Activated CD4-positive, alpha-beta memory T cell treated with anti-CD3 and anti-CD28 coated beads, Interleukin-2, amount 10 ng/mL, durations not matched to agents 7 days and 5 days (primary cell): ENCODE measurements at regions of chr15 and their contacts with region 1.

Region 1: DNA sequence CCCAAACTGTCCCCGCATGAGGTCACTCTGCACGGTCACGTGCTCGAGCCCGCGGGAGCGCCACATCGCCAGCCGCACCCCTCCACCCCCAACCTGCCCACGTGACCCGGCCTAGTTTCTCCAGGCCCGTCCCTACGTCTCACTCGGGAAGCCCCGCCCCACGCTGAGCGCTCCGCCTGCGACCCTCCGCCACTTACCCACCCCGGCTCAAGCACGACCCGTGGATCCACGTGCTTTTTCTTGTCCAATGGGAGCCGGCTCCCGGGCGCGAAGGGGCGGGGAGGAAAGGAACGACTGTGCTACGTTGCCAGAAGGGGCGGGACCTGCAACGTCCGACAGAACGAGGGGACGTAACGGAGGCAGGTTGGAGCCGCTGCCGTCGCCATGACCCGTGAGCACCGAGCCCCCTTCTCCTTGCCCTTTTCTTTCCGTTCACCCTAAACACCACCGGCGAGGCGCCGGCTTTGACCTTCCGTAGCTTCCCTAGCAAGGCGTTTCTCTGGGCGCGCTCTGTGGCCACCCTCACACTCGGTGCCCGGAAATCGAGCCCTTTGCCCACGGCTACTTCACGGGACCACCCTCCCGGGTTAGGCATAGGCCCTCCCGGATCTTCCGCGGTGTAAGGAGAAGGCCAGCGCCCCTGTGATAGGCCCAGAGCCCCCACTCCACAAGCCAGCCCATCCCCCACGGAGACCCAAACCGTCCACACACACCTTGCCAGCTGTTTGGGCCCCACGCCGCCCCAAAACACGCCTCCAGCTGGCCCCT is at the start of gene SERF2:
- DNase-seq: peak; percentile 100
- H3K4me3 Mint-ChIP-seq: peak within 1 kb of the TSS; percentile 95
- H3K27ac Mint-ChIP-seq: peak within 1 kb of the TSS; percentile 95
- H3K4me1 Mint-ChIP-seq: peaks cover 38% of the 10 kb centered on the region
- H3K27me3 Mint-ChIP-seq: no peaks in the 10 kb centered on the region
- total RNA-seq, gene SERF2: 907 to 928 TPM

Region 2: GRCh38 chr15:43541785-43542184 is 250.4 kb before region 1 on chr15:
- CTCF ChIA-PET with region 1: no interaction called
- POLR2A ChIA-PET with region 1: no interaction called
- DNase-seq: no peak
- H3K4me3 Mint-ChIP-seq: no peak overlapping the region
- H3K27ac Mint-ChIP-seq: no peak overlapping the region
- H3K4me1 Mint-ChIP-seq: peaks cover 4% of the 10 kb centered on the region
- H3K27me3 Mint-ChIP-seq: no peaks in the 10 kb centered on the region

Region 3: GRCh38 chr15:43749690-43750345 is 42.4 kb before region 1 on chr15:
- CTCF ChIA-PET with region 1: interaction called, 3 read pairs
- POLR2A ChIA-PET with region 1: interaction called, 15 read pairs
- DNase-seq: peak; percentile 60
- H3K4me3 Mint-ChIP-seq: peak overlapping the region; percentile 56
- H3K27ac Mint-ChIP-seq: peak overlapping the region; percentile 83
- H3K4me1 Mint-ChIP-seq: peaks cover 43% of the 10 kb centered on the region
- H3K27me3 Mint-ChIP-seq: no peaks in the 10 kb centered on the region

Region 4: DNA sequence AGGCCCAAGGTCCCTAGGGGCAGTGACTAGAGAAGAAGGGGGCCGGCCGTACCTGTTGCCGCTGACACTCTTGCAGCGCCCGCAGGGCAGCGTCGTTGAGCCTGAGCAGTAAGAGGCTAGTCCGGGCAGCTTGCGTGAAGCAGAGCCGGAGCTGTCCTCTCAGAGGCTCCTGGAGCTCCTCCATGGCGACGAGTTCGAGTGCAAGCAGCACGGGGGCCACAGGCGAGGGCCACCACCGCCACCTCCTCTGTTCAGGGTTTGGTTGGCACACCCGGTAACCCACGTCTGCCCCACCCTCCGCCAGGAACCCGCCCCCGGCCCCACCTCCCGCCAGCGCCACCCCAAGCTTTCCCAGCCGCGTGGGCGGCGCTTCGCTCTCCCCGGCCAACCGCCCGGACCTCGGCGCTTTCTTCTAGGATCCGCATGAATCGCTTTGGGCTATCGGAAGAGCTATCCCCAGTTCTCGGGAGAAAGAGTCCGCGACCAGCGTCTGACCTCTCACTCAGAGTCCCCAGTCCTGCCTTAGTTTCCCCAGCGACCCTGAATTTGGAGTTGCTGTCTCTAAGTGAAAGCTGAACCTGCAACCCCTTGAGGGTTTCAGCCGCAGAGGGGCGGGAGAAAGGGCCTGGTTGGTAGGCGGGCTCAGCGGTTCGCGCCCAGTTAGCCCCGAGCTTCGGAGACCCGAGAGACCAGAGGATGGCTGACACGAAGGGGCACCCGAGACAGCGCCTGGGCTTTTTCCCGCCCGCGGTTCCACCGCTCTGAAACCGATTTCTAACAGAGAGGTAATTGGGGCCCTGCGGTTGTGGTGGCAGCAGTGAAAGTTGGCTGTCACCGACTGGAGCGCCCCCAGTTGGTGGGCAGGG is 15.2 kb before region 1 on chr15 and contains the start of gene ELL3:
- CTCF ChIA-PET with region 1: interaction called, 7 read pairs
- POLR2A ChIA-PET with region 1: interaction called, 45 read pairs
- DNase-seq: peak; percentile 81
- H3K4me3 Mint-ChIP-seq: peak within 1 kb of the TSS; percentile 81
- H3K27ac Mint-ChIP-seq: peak within 1 kb of the TSS; percentile 63
- H3K4me1 Mint-ChIP-seq: peaks cover 16% of the 10 kb centered on the region
- H3K27me3 Mint-ChIP-seq: peaks cover 21% of the 10 kb centered on the region
- total RNA-seq, gene ELL3: 0.25 to 0.33 TPM

Region 5: DNA sequence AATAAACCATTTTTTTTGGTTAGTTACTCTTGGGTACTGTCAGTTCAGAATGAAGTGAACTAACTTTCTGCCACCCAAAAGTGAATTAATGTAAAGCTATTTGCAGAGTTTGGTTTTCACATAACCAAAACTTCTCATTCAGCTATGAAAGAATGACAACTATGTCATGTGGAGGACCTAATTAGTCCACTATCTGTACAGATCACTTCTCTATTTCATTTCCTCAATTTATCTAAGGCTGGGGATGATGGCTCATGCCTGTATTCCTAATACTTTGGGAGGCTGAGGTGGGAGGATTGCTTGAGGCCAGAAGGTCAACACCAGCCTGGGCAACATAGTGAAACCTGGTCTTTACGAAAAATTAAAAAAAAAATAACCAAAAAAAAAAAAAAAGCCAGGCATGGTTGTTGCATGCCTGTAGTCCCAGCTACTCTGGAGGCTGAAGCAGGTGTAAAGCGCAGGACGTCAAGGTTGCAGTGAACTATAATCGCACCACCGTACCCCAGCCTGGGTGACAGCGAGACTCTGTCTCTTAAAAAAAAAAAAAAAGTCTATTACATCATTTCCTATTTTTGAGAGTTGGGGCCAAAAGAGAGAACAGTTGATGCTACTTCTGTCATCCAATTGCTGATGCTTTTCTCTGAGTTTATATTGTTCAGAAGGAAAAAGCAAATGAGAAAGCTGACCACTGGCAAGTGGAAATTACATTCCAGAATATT is 16.9 kb after region 1 on chr15:
- CTCF ChIA-PET with region 1: no interaction called
- POLR2A ChIA-PET with region 1: interaction called, 12 read pairs
- DNase-seq: no peak
- H3K4me3 Mint-ChIP-seq: no peak overlapping the region
- H3K27ac Mint-ChIP-seq: peak overlapping the region; percentile 26
- H3K4me1 Mint-ChIP-seq: peaks cover 12% of the 10 kb centered on the region
- H3K27me3 Mint-ChIP-seq: no peaks in the 10 kb centered on the region

Region 6: DNA sequence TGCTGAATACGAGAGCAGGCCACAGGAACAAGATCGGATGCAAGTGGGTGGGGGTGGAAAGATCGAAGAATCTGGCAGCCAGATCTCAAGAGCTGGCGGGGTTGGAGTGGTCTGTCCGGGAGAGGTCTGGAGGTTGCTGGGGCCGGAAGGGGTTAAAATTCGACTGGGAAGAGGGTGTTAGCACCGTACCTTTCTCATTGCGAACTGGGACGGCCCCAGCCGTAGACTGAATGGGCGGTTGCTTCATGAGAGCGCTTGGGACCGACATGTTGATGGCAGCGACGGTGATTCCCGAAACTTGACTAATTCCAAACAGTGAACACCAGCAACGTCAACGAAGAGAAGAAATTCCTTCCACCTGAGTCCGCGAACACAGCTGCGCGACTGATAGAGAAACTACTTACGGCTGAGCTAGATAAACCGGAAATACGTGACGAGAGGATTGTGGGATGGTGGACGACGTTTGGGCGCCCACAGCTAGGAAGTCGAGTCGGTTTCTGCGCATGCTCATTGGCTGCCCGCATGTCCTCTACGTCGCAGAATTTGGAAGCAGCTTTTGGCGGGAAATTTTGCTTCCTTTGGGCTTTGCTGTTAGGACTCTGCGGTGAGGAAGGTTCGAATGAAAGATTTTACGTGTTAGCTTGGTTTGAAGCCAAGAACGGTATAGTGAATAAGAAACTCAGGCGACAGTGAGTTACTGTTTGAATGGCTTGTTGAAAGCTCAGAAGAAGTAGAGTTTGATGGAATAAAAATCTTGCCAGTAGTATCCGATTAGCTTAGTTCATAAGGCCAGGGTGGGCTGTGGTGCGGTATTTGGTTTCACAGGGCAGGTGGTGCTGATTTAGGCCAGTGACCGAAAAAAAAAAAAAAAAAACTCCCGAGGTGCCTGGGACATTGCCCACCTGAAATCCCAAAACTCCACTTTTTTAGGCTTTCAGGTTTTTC is 32.4 kb after region 1 on chr15 and contains the start of gene MFAP1:
- CTCF ChIA-PET with region 1: interaction called, 4 read pairs
- POLR2A ChIA-PET with region 1: interaction called, 163 read pairs
- DNase-seq: peak; percentile 93
- H3K4me3 Mint-ChIP-seq: peak within 1 kb of the TSS; percentile 98
- H3K27ac Mint-ChIP-seq: peak within 1 kb of the TSS; percentile 93
- H3K4me1 Mint-ChIP-seq: peaks cover 71% of the 10 kb centered on the region
- H3K27me3 Mint-ChIP-seq: no peaks in the 10 kb centered on the region
- total RNA-seq, gene MFAP1: 34.4 to 37.3 TPM